ENCODE measurements at regions of chr12 and their contacts with region 1.

Region 1: GRCh38 chr12:102702447-102703114 is 214.5 kb downstream of the PAH start:
- H3K4me3 Mint-ChIP-seq: no peak overlapping the region
- H3K27ac Mint-ChIP-seq: peak overlapping the region; percentile 57
- H3K4me1 Mint-ChIP-seq: no peaks in the 10 kb centered on the region
- H3K27me3 Mint-ChIP-seq: peaks cover 5% of the 10 kb centered on the region

Region 2: GRCh38 chr12:102095675-102096263 is 606.8 kb before region 1 on chr12:
- intact Hi-C with region 1: loop called (anchors 10 kb)
- H3K4me3 Mint-ChIP-seq: no peak overlapping the region
- H3K27ac Mint-ChIP-seq: no peak overlapping the region
- H3K4me1 Mint-ChIP-seq: no peaks in the 10 kb centered on the region
- H3K27me3 Mint-ChIP-seq: no peaks in the 10 kb centered on the region

Region 3: GRCh38 chr12:102169922-102170621 is 532.5 kb before region 1 on chr12:
- intact Hi-C with region 1: loop called (anchors 5 kb)
- H3K4me3 Mint-ChIP-seq: no peak overlapping the region
- H3K27ac Mint-ChIP-seq: no peak overlapping the region
- H3K4me1 Mint-ChIP-seq: peaks cover 15% of the 10 kb centered on the region
- H3K27me3 Mint-ChIP-seq: no peaks in the 10 kb centered on the region

Region 4: DNA sequence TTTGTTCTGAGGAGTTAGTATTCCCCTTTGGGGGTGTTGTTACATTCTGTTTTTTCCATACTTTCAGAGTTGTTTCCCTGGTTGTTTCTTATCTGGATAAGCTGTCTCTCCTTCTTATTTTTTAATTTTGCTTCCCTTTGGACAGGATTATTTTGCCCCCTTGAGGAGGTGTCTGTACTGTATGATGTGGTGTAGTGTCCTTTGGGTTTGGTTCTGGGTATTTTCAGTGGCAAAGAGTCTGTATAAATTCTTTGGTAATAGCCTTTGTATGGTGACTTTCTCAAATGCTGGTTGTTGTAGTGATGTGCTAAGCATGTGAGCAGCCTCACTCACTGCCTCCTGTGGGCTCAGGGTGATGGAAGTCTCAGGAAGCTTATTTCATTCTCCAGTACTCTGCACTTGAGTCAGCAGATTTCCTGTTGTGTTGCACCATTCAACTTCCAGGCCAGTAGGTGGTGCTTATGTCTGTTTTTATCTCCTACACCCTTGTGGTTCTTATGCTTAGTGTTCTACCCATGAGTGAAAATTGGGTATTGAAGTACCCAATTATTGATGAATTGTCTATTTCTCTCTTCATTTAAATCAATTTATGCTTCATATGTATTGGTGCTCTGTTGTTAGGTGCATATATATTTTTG is 401.6 kb before region 1 on chr12:
- intact Hi-C with region 1: loop called (anchors 1 kb)
- H3K4me3 Mint-ChIP-seq: no peak overlapping the region
- H3K27ac Mint-ChIP-seq: no peak overlapping the region
- H3K4me1 Mint-ChIP-seq: no peaks in the 10 kb centered on the region
- H3K27me3 Mint-ChIP-seq: peaks cover 2% of the 10 kb centered on the region

Region 5: GRCh38 chr12:102543494-102544485 is 158.8 kb before region 1 on chr12:
- intact Hi-C with region 1: no loop called
- H3K4me3 Mint-ChIP-seq: no peak overlapping the region
- H3K27ac Mint-ChIP-seq: peak overlapping the region; percentile 2
- H3K4me1 Mint-ChIP-seq: peaks cover 24% of the 10 kb centered on the region
- H3K27me3 Mint-ChIP-seq: peaks cover 21% of the 10 kb centered on the region

Region 6: DNA sequence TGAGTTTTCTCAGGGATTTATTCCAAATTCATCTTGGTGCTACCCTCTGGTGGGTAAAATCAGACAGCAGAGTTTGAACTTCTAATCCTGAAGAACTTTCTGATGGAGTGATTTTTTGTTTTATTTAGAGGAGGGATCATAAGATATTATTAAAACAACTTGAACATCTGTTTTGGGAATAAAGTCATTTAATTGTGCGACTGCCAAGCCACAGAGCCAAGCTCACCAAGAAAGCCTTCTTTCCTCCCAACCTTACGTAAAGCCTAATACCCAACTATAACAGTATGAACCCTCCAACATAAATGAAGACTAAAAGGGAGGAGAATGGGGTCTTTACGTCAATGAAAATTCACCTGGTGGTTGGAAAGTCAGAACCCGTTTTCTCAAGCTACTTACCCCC is 16.7 kb before region 1 on chr12:
- intact Hi-C with region 1: no loop called
- H3K4me3 Mint-ChIP-seq: no peak overlapping the region
- H3K27ac Mint-ChIP-seq: no peak overlapping the region
- H3K4me1 Mint-ChIP-seq: no peaks in the 10 kb centered on the region
- H3K27me3 Mint-ChIP-seq: no peaks in the 10 kb centered on the region

Measured in dendritic cell treated with granulocyte-macrophage colony-stimulating factor and Interleukin-4, amounts not matched to agents 40 ng/mL and 50 ng/mL, for 4 days (primary cell).